ENCODE measurements at regions of chr15 and their contacts with region 1.

Region 1: DNA sequence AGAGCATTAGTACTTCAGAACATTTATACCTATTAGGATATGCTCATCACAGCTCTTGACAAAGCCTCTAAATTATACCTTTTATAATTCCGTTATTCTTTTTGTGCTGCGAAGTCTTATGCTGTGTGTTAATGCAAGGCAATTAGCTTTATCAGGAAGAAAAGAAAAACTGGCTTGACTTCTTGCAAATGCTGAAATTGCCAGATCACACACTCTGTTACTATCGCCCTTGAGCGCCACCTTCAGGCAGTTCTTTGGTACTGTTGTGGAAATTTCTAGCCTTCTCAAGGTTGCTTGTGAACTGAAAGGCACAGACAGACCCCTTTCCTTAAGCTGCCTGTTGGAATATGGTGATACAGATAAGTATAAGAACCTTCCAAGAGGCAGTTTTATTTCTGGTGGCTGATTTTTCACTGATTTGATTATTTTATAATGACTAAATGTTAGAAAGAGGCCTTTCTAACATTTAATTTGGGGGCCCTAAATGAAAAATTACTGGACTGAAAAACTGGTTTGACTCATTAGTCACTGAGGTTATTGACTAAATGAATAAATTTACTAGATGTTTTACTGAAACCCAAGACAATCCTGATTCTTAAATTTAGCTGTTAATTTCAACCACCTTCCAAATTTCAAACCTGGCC is 126.2 kb upstream of the RASGRP1 start:
- DNase-seq: peak; percentile 68 to 82 (median 72)
- H3K4me3 ChIP-seq: no peak overlapping the region
- H3K4me3 Mint-ChIP-seq: no peak overlapping the region
- H3K27ac ChIP-seq: no peak overlapping the region
- H3K27ac Mint-ChIP-seq: peak overlapping the region in 2 of 8 donors; percentile 57 to 91
- H3K4me1 ChIP-seq: peaks cover 61% of the 10 kb centered on the region
- H3K4me1 Mint-ChIP-seq: peaks cover 70 to 84% (median 72%) of the 10 kb centered on the region in 3 donors
- H3K27me3 ChIP-seq: no peaks in the 10 kb centered on the region
- H3K27me3 Mint-ChIP-seq: no peaks in the 10 kb centered on the region

Region 2: GRCh38 chr15:38440353-38441129 is 250.3 kb before region 1 on chr15:
- CTCF ChIA-PET with region 1: interaction called, 38 read pairs
- POLR2A ChIA-PET with region 1: no interaction called
- DNase-seq: peak in 4 of 5 donors; percentile 28 to 64 (median 54)
- H3K4me3 ChIP-seq: no peak overlapping the region
- H3K4me3 Mint-ChIP-seq: no peak overlapping the region
- H3K27ac ChIP-seq: no peak overlapping the region
- H3K27ac Mint-ChIP-seq: peak overlapping the region in 2 of 8 donors; percentile 12 to 56
- H3K4me1 ChIP-seq: no peaks in the 10 kb centered on the region
- H3K4me1 Mint-ChIP-seq: peaks cover 4 to 6% (median 4%) of the 10 kb centered on the region in 3 donors
- H3K27me3 ChIP-seq: no peaks in the 10 kb centered on the region
- H3K27me3 Mint-ChIP-seq: peaks cover 16 to 37% of the 10 kb centered on the region in 2 donors

Region 3: DNA sequence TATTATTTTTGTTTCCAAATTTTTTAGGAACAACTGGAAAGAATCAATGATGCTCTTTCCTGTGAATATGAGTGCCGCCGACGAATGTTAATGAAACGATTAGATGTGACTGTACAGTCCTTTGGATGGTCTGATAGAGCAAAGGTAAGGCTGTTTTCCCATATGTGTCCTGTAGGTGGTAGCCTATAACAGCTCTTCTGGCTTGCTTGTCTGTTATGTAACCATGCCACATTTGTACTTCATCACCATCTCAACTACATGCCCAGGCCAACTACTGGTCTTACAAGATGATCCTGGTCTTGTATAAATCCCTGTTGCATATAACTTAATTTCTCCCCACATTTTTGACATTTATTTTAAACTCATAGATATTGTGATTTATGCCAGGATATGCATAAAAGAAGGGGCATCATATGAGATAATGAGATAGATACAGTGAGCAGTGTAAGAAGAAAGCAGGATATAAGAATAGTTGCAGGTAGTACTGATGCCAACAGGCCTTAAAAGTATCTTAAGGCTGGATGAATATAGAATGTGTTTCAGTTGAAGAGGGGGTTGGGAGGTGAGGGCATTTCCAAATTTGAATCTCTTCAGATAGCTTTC is 216.6 kb before region 1 on chr15:
- CTCF ChIA-PET with region 1: interaction called, 31 read pairs
- POLR2A ChIA-PET with region 1: interaction called, 3 read pairs
- DNase-seq: peak in 4 of 5 donors; percentile 12 to 64 (median 62)
- H3K4me3 ChIP-seq: no peak overlapping the region
- H3K4me3 Mint-ChIP-seq: no peak overlapping the region
- H3K27ac ChIP-seq: no peak overlapping the region
- H3K27ac Mint-ChIP-seq: peak overlapping the region in 7 of 8 donors; percentile 6 to 89 (median 76)
- H3K4me1 ChIP-seq: peaks cover 7% of the 10 kb centered on the region
- H3K4me1 Mint-ChIP-seq: peaks cover 7 to 8% (median 8%) of the 10 kb centered on the region in 3 donors
- H3K27me3 ChIP-seq: no peaks in the 10 kb centered on the region
- H3K27me3 Mint-ChIP-seq: no peaks in the 10 kb centered on the region

Region 4: GRCh38 chr15:38486936-38487335 is 203.9 kb before region 1 on chr15:
- CTCF ChIA-PET with region 1: interaction called, 14 read pairs
- POLR2A ChIA-PET with region 1: interaction called, 3 read pairs
- DNase-seq: peak in 2 of 5 donors; percentile 5 to 11
- H3K4me3 ChIP-seq: no peak overlapping the region
- H3K4me3 Mint-ChIP-seq: peak overlapping the region in 2 of 7 donors; percentile 9 to 28
- H3K27ac ChIP-seq: no peak overlapping the region
- H3K27ac Mint-ChIP-seq: peak overlapping the region; percentile 72 to 98 (median 90)
- H3K4me1 ChIP-seq: peaks cover 29% of the 10 kb centered on the region
- H3K4me1 Mint-ChIP-seq: peaks cover 34 to 72% (median 58%) of the 10 kb centered on the region in 3 donors
- H3K27me3 ChIP-seq: no peaks in the 10 kb centered on the region
- H3K27me3 Mint-ChIP-seq: no peaks in the 10 kb centered on the region

Region 5: DNA sequence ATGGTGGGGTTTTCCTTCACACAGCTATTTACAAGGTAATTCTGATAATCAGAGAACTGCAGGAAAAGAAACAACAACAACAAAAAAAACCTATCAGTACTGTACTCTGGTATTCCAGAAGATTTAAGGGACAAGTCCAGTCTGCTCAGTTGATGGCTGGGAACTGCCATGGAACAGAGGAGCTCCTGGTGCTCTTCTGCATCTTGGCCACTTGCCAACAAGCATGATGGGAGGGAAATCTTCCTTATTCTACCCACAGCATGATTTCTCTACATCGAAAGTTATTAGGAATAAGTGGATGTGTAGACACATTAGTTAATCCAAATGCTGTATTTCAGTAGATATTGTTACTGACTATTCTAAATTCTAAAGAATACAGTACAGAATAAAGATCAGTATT is 177.9 kb before region 1 on chr15:
- CTCF ChIA-PET with region 1: interaction called, 30 read pairs
- POLR2A ChIA-PET with region 1: no interaction called
- DNase-seq: no peak
- H3K4me3 ChIP-seq: no peak overlapping the region
- H3K4me3 Mint-ChIP-seq: no peak overlapping the region
- H3K27ac ChIP-seq: no peak overlapping the region
- H3K27ac Mint-ChIP-seq: peak overlapping the region in 7 of 8 donors; percentile 17 to 91 (median 60)
- H3K4me1 ChIP-seq: no peaks in the 10 kb centered on the region
- H3K4me1 Mint-ChIP-seq: peaks cover 15 to 40% (median 36%) of the 10 kb centered on the region in 3 donors
- H3K27me3 ChIP-seq: no peaks in the 10 kb centered on the region
- H3K27me3 Mint-ChIP-seq: no peaks in the 10 kb centered on the region

Region 6: GRCh38 chr15:38554354-38554753 is 136.5 kb before region 1 on chr15:
- CTCF ChIA-PET with region 1: interaction called, 110 read pairs
- POLR2A ChIA-PET with region 1: no interaction called
- DNase-seq: no peak
- H3K4me3 ChIP-seq: no peak overlapping the region
- H3K4me3 Mint-ChIP-seq: peak overlapping the region in 6 of 7 donors; percentile 18 to 99 (median 74)
- H3K27ac ChIP-seq: no peak overlapping the region
- H3K27ac Mint-ChIP-seq: peak overlapping the region; percentile 80 to 98 (median 91)
- H3K4me1 ChIP-seq: peaks cover 95% of the 10 kb centered on the region
- H3K4me1 Mint-ChIP-seq: peaks cover 88 to 100% (median 95%) of the 10 kb centered on the region in 3 donors
- H3K27me3 ChIP-seq: no peaks in the 10 kb centered on the region
- H3K27me3 Mint-ChIP-seq: no peaks in the 10 kb centered on the region

Region 7: DNA sequence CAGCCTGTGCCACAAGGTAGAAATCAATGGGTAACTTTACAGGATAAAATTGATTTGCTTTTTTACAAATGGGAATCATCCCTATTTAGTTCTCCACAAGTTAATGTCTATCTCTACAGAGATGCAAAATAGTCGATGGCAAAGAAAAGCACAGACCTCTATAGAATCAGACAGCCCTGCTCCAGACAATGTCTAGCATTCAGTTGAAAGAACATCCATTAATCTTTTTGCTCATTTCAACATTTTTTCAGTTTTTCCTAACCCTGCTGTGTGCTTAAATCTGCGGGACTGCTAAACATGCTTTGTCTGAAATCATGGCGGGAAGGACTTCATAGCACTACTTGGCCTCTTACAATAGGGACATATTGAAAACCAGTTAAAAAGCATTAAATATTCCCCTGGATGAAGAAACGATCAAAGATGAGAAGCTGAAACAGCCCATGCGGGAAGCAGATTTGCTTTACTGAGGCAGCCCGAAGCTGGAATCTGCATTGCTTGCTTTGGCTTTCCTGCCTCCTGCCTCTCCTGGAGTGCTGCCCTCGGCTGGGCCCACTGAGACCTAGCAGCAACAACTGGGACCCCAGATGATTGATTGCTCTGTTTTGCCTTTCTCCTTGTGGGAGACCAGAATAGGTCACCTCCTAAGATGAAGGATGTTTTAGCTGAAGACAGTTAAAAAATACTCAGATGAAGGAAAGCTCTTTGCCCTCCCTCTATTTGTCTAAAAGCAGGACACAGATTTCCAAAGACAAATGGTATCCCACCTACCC is 87.7 kb before region 1 on chr15:
- CTCF ChIA-PET with region 1: no interaction called
- POLR2A ChIA-PET with region 1: no interaction called
- DNase-seq: no peak
- H3K4me3 ChIP-seq: no peak overlapping the region
- H3K4me3 Mint-ChIP-seq: no peak overlapping the region
- H3K27ac ChIP-seq: no peak overlapping the region
- H3K27ac Mint-ChIP-seq: no peak overlapping the region
- H3K4me1 ChIP-seq: no peaks in the 10 kb centered on the region
- H3K4me1 Mint-ChIP-seq: peaks cover 2 to 5% (median 2%) of the 10 kb centered on the region in 3 donors
- H3K27me3 ChIP-seq: no peaks in the 10 kb centered on the region
- H3K27me3 Mint-ChIP-seq: no peaks in the 10 kb centered on the region

Region 8: GRCh38 chr15:38671675-38672254 is 19.0 kb before region 1 on chr15:
- CTCF ChIA-PET with region 1: interaction called, 79 read pairs
- POLR2A ChIA-PET with region 1: interaction called, 15 read pairs
- DNase-seq: peak; percentile 35 to 69 (median 62)
- H3K4me3 ChIP-seq: peak overlapping the region; percentile 13
- H3K4me3 Mint-ChIP-seq: peak overlapping the region; percentile 6 to 75 (median 68)
- H3K27ac ChIP-seq: peak overlapping the region; percentile 62
- H3K27ac Mint-ChIP-seq: peak overlapping the region; percentile 95 to 100 (median 98)
- H3K4me1 ChIP-seq: peaks cover 75% of the 10 kb centered on the region
- H3K4me1 Mint-ChIP-seq: peaks cover 67 to 85% (median 82%) of the 10 kb centered on the region in 3 donors
- H3K27me3 ChIP-seq: no peaks in the 10 kb centered on the region
- H3K27me3 Mint-ChIP-seq: no peaks in the 10 kb centered on the region

Region 9: DNA sequence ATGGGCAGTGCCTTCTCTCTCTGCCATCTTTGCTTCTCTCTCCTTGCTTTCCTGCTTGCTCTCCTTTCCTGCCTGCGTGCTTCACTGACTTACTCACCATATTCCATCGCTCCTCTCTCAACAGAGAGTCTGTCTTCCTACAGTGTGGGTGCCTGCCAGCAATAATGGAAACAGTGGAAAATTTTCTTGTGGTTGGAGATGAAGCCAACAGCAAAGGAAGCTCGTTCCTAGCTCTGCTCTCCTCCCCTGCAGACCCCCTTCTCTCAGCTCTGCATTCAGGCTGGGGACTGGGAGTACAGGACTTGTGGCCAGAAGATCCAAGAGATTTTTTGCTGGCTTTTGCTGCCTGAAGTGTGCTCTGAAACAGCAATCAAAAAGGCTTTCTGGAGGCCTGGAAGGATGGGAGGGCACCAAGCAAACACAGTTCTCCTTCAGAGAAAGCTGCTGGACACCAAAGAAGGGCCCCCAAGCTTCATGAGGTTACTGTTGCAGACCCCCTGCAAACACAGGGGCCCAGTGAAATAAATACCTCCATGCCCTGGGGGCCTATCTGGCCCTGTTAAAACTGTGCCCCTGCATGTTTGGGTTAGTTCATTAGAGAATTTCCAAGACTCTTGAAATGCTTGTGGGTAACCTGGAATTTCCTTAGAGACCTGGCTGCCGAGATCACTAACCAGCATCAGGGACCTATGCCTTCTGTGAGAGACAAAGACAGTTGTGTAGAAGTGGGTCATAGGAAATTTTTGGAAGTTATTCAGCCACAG is 23.7 kb after region 1 on chr15:
- CTCF ChIA-PET with region 1: no interaction called
- POLR2A ChIA-PET with region 1: no interaction called
- DNase-seq: no peak
- H3K4me3 ChIP-seq: no peak overlapping the region
- H3K4me3 Mint-ChIP-seq: no peak overlapping the region
- H3K27ac ChIP-seq: no peak overlapping the region
- H3K27ac Mint-ChIP-seq: no peak overlapping the region
- H3K4me1 ChIP-seq: no peaks in the 10 kb centered on the region
- H3K4me1 Mint-ChIP-seq: no peaks in the 10 kb centered on the region
- H3K27me3 ChIP-seq: no peaks in the 10 kb centered on the region
- H3K27me3 Mint-ChIP-seq: peaks cover 4 to 9% of the 10 kb centered on the region in 2 donors

Region 10: GRCh38 chr15:38745126-38745525 is 54.3 kb after region 1 on chr15:
- CTCF ChIA-PET with region 1: no interaction called
- POLR2A ChIA-PET with region 1: no interaction called
- DNase-seq: no peak
- H3K4me3 ChIP-seq: no peak overlapping the region
- H3K4me3 Mint-ChIP-seq: no peak overlapping the region
- H3K27ac ChIP-seq: no peak overlapping the region
- H3K27ac Mint-ChIP-seq: no peak overlapping the region
- H3K4me1 ChIP-seq: no peaks in the 10 kb centered on the region
- H3K4me1 Mint-ChIP-seq: no peaks in the 10 kb centered on the region
- H3K27me3 ChIP-seq: no peaks in the 10 kb centered on the region
- H3K27me3 Mint-ChIP-seq: peaks cover under 1 to 4% of the 10 kb centered on the region in 2 donors